HEK293T (cell line): ENCODE measurements at regions of chr11 and their contacts with region 1.

Region 1: DNA sequence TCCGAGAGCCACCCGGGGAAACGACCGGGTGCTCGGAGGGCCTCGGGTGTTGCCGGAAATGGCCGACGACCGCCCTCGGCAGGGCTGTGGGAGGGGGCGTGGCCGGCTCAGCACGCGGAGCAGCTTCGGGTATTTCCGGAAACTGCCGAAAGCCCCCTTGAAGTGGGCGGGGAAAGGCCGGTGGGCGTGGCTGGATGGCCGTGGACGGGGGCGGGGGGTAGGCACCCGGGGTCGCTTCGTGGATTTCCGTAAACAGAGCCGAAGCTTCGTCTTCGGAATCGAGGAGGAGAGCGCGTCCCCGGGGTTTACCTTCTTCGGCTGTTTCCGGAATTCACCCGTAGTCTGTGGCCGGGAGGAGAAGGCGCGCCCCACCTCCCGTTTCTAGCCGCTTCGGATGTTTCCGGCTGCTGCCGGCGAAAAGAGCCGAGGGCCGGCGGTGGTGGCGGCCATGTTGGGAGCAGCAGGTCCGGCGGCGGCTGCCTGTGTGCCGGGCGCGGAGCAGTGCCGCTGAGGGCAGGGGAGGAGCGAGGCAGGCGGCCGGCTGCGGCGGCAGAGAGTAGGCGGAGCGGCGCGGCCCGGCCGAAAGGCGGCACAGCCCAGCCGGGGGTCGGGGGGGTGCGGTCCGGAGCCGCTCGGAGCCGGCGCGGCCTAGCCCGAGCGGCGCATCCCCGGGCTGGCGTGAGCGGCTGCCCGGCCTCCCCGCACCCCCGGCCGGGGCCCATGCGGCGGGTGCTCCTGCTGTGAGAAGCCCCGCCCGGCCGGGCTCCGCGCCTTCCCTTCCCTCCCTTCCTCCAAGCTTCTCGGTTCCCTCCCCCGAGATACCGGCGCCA is at the start of gene MARK2:
- DNase-seq: peak; percentile 99

Region 2: GRCh38 chr11:63800921-63801320 is 38.0 kb before region 1 on chr11:
- CTCF ChIA-PET with region 1: no interaction called
- POLR2A ChIA-PET with region 1: no interaction called
- DNase-seq: no peak

Region 3: DNA sequence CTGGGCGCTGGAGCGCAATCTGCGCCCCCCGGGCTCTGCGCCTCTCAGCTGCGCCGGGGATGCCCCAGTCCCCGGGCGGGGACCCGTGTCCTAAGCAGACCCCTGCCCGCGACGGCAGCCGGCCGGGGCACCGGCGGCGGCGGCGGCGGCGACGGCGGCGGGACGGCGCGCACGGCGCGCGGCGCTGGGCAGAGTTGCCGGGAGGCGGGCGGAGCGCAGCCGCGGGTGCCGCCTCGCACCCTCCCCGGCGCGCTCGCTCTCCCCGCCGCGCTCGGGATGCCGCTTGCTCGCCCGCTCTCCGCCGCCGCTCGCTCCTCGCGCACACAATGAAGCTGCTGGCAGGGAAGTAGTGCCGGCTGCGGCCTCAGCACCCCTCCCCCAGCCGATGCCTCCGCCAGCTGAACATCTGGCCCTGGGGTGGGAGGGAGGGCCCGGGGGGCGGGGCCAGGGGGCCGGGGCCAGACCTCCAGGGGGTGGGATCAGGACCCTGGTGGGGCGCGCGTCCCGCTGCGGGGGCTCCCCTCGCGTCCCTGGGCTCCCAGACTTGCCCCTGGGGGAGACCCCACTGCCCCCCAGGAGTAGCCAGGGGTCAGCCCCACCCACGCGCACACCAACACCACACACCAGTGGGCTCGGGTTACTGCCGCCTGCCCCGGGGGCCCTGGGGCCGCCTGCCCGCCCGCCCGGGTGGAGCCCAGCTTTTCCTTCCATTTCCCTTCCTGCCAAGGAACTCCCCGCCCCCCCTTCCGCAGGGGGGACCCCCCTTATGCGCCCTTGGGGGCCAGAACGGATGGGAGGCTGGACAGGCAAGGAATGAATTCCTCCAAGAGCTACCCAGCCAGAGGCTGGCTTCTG is 78.2 kb after region 1 on chr11 and contains the start of gene RCOR2:
- CTCF ChIA-PET with region 1: no interaction called
- POLR2A ChIA-PET with region 1: interaction called, 11 read pairs
- DNase-seq: peak; percentile 85

Region 4: DNA sequence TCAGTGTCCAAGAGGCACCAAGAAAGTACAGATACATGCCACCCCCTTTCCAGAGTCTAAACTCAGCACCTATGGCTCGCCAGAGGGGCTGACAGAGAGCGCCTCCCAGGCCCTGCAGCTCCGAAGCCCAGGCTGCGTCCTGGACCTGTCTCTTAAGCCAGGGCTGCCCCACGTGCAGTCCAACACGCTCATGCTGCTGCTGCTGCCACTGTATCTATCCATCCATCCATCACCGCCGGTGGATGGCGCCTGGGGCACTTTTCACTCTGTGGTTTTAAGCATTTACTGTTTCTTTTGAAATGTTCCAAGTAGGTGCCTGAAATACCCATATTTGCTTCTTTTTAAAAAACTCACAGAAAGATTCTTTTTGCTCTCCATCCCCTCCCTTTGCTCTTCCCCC is 285.3 kb after region 1 on chr11:
- CTCF ChIA-PET with region 1: no interaction called
- POLR2A ChIA-PET with region 1: no interaction called
- DNase-seq: peak; percentile 40